Prostate gland (tissue), 2 donors: ENCODE measurements at regions of chr15 and their contacts with region 1.

Region 1: GRCh38 chr15:47196057-47196456 is 521.2 kb upstream of the SEMA6D start:
- DNase-seq: peak; percentile 73
- H3K4me3 ChIP-seq: no peak overlapping the region
- H3K27ac ChIP-seq: no peak overlapping the region
- H3K4me1 ChIP-seq: no peaks in the 10 kb centered on the region
- H3K27me3 ChIP-seq: no peaks in the 10 kb centered on the region
- CTCF ChIP-seq: peak in 3 of 4 experiments; percentile 71 to 80 (median 78)
- POLR2A ChIP-seq: no peak

Region 2: GRCh38 chr15:47717036-47717611 is 521.1 kb after region 1 on chr15 and contains the start of gene SEMA6D:
- intact Hi-C with region 1: loop called (anchors 5 kb)
- DNase-seq: peak; percentile 79
- H3K4me3 ChIP-seq: peak within 1 kb of the TSS; percentile 49 to 56
- H3K27ac ChIP-seq: peak within 1 kb of the TSS; percentile 62 to 76
- H3K4me1 ChIP-seq: no peaks in the 10 kb centered on the region
- H3K27me3 ChIP-seq: no peaks in the 10 kb centered on the region
- CTCF ChIP-seq: peak in 3 of 4 experiments; percentile 18 to 60 (median 35)
- POLR2A ChIP-seq: peak; percentile 3
- total RNA-seq, gene SEMA6D: 9.8 to 18.1 TPM

Region 3: GRCh38 chr15:47987908-47988532 is 792.0 kb after region 1 on chr15:
- intact Hi-C with region 1: loop called (anchors 1 kb)
- DNase-seq: peak; percentile 57
- H3K4me3 ChIP-seq: no peak overlapping the region
- H3K27ac ChIP-seq: no peak overlapping the region
- H3K4me1 ChIP-seq: no peaks in the 10 kb centered on the region
- H3K27me3 ChIP-seq: no peaks in the 10 kb centered on the region
- CTCF ChIP-seq: peak in 3 of 4 experiments; percentile 66 to 82 (median 77)
- POLR2A ChIP-seq: no peak

Region 4: DNA sequence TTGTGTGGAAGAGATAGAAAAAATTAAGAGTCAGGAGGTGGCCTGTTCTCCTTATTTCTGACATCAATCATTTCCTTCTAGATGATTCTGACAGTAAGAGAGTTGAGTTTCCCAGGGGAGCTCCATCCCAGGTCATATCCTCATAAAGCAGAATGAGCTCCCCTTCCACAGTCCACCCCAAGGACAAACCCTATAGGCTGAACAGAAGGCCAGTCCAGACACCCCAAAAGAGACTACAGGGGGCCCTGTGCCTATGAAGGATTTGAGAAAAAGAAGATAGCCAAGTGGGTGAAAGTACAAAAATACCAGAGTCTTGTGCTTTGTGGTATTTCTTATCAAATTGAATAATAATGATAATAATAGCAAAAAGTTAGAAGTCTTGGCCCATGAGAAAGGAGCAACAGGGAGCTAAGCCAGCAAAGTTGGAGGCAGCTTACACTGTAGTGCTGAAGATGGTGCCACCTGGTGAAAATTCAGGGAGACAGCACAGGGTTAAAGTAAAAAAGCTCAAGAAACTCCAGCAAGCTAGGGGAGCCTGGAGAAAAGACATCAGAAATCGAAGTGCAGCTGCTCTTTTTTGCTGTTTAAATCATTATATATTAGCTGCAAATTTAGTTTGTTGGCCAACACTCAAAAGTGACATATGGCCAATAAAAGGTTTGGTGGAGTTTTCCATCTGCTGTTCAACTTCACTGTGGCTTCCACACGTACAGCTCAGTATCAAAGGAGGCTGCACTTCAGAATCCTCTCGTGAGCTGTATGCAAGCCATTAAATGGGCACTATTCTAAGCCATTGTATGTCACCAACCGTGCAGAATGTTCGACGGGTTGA is 888.9 kb after region 1 on chr15:
- intact Hi-C with region 1: loop called (anchors 5 kb)
- DNase-seq: peak; percentile 8
- H3K4me3 ChIP-seq: no peak overlapping the region
- H3K27ac ChIP-seq: no peak overlapping the region
- H3K4me1 ChIP-seq: no peaks in the 10 kb centered on the region
- H3K27me3 ChIP-seq: no peaks in the 10 kb centered on the region
- CTCF ChIP-seq: peak in 3 of 4 experiments; percentile 12 to 38 (median 26)
- POLR2A ChIP-seq: no peak

Region 5: GRCh38 chr15:48250640-48251076 is 1054.6 kb after region 1 on chr15:
- intact Hi-C with region 1: loop called (anchors 10 kb)
- DNase-seq: peak; percentile 25
- H3K4me3 ChIP-seq: no peak overlapping the region
- H3K27ac ChIP-seq: no peak overlapping the region
- H3K4me1 ChIP-seq: no peaks in the 10 kb centered on the region
- H3K27me3 ChIP-seq: no peaks in the 10 kb centered on the region
- CTCF ChIP-seq: peak in 3 of 4 experiments; percentile 58 to 71 (median 66)
- POLR2A ChIP-seq: no peak